ENCODE measurements at regions of chr10 and their contacts with region 1.

Region 1: GRCh38 chr10:74406006-74406405 is 255.0 kb downstream of the ADK start:
- DNase-seq: peak; percentile 14
- ATAC-seq: no peak
- H3K4me3 ChIP-seq: no peak overlapping the region
- H3K4me3 Mint-ChIP-seq: no peak overlapping the region
- H3K27ac ChIP-seq: peak overlapping the region in 1 of 2 donors; percentile 30
- H3K27ac Mint-ChIP-seq: peak overlapping the region; percentile 66
- H3K4me1 ChIP-seq: peaks cover 0 to 7% of the 10 kb centered on the region in 2 donors
- H3K4me1 Mint-ChIP-seq: peaks cover 14% of the 10 kb centered on the region
- H3K27me3 ChIP-seq: no peaks in the 10 kb centered on the region
- H3K27me3 Mint-ChIP-seq: no peaks in the 10 kb centered on the region
- CTCF ChIP-seq: no peak

Region 2: GRCh38 chr10:74363727-74364126 is 42.3 kb before region 1 on chr10:
- CTCF ChIA-PET with region 1: no interaction called
- POLR2A ChIA-PET with region 1: no interaction called
- intact Hi-C with region 1: loop called (anchors 10 kb)
- DNase-seq: no peak
- ATAC-seq: no peak
- H3K4me3 ChIP-seq: no peak overlapping the region
- H3K4me3 Mint-ChIP-seq: no peak overlapping the region
- H3K27ac ChIP-seq: no peak overlapping the region
- H3K27ac Mint-ChIP-seq: peak overlapping the region; percentile 20
- H3K4me1 ChIP-seq: no peaks in the 10 kb centered on the region
- H3K4me1 Mint-ChIP-seq: peaks cover 12% of the 10 kb centered on the region
- H3K27me3 ChIP-seq: no peaks in the 10 kb centered on the region
- H3K27me3 Mint-ChIP-seq: no peaks in the 10 kb centered on the region
- CTCF ChIP-seq: no peak

Region 3: DNA sequence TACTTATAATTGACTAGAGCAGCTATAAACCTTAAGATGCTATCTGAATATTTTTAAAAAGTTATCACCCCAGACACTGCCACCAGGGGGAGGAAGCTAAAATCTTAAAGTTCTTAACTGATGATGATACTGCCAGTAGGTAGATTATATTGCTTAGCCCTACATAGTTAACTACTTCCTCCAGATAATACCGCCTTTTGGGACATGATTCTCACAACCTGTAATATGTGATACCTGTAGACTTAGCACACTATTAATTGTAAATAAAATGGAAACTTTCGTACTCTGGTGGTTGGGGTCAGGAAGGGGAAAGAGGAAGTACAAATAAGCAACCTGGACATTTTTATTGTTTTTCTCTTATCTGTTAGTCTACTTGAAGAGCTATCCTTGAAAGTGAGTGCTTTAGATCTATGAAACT is 14.0 kb after region 1 on chr10:
- CTCF ChIA-PET with region 1: interaction called, 10 read pairs
- POLR2A ChIA-PET with region 1: no interaction called
- intact Hi-C with region 1: no loop called
- DNase-seq: peak; percentile 42
- ATAC-seq: peak; percentile 49
- H3K4me3 ChIP-seq: no peak overlapping the region
- H3K4me3 Mint-ChIP-seq: no peak overlapping the region
- H3K27ac ChIP-seq: no peak overlapping the region
- H3K27ac Mint-ChIP-seq: no peak overlapping the region
- H3K4me1 ChIP-seq: peaks cover 7 to 16% of the 10 kb centered on the region in 2 donors
- H3K4me1 Mint-ChIP-seq: peaks cover 21% of the 10 kb centered on the region
- H3K27me3 ChIP-seq: no peaks in the 10 kb centered on the region
- H3K27me3 Mint-ChIP-seq: no peaks in the 10 kb centered on the region
- CTCF ChIP-seq: peak; percentile 68

Measured in B cell (primary cell).